ENCODE measurements at regions of chr1 and their contacts with region 1.

Region 1: GRCh38 chr1:28877132-28877781 is 37.1 kb upstream of the EPB41 start:
- DNase-seq: peak; percentile 84
- ATAC-seq: peak; percentile 78
- H3K4me3 ChIP-seq: no peak overlapping the region
- H3K4me3 Mint-ChIP-seq: no peak overlapping the region
- H3K27ac ChIP-seq: no peak overlapping the region
- H3K27ac Mint-ChIP-seq: no peak overlapping the region
- H3K4me1 ChIP-seq: peaks cover 4 to 5% of the 10 kb centered on the region in 2 donors
- H3K4me1 Mint-ChIP-seq: peaks cover 8% of the 10 kb centered on the region
- H3K27me3 ChIP-seq: no peaks in the 10 kb centered on the region
- H3K27me3 Mint-ChIP-seq: no peaks in the 10 kb centered on the region
- CTCF ChIP-seq: peak; percentile 99

Region 2: GRCh38 chr1:28412731-28413130 is 464.5 kb before region 1 on chr1:
- CTCF ChIA-PET with region 1: interaction called, 24 read pairs
- POLR2A ChIA-PET with region 1: interaction called, 3 read pairs
- intact Hi-C with region 1: no loop called
- DNase-seq: no peak
- ATAC-seq: no peak
- H3K4me3 ChIP-seq: no peak overlapping the region
- H3K4me3 Mint-ChIP-seq: no peak overlapping the region
- H3K27ac ChIP-seq: no peak overlapping the region
- H3K27ac Mint-ChIP-seq: no peak overlapping the region
- H3K4me1 ChIP-seq: peaks cover 2 to 6% of the 10 kb centered on the region in 2 donors
- H3K4me1 Mint-ChIP-seq: peaks cover 13% of the 10 kb centered on the region
- H3K27me3 ChIP-seq: no peaks in the 10 kb centered on the region
- H3K27me3 Mint-ChIP-seq: no peaks in the 10 kb centered on the region
- CTCF ChIP-seq: no peak

Region 3: GRCh38 chr1:28613175-28613574 is 264.1 kb before region 1 on chr1:
- CTCF ChIA-PET with region 1: no interaction called
- POLR2A ChIA-PET with region 1: no interaction called
- intact Hi-C with region 1: no loop called
- DNase-seq: no peak
- ATAC-seq: no peak
- H3K4me3 ChIP-seq: no peak overlapping the region
- H3K4me3 Mint-ChIP-seq: no peak overlapping the region
- H3K27ac ChIP-seq: no peak overlapping the region
- H3K27ac Mint-ChIP-seq: no peak overlapping the region
- H3K4me1 ChIP-seq: no peaks in the 10 kb centered on the region
- H3K4me1 Mint-ChIP-seq: no peaks in the 10 kb centered on the region
- H3K27me3 ChIP-seq: no peaks in the 10 kb centered on the region
- H3K27me3 Mint-ChIP-seq: no peaks in the 10 kb centered on the region
- CTCF ChIP-seq: no peak

Region 4: DNA sequence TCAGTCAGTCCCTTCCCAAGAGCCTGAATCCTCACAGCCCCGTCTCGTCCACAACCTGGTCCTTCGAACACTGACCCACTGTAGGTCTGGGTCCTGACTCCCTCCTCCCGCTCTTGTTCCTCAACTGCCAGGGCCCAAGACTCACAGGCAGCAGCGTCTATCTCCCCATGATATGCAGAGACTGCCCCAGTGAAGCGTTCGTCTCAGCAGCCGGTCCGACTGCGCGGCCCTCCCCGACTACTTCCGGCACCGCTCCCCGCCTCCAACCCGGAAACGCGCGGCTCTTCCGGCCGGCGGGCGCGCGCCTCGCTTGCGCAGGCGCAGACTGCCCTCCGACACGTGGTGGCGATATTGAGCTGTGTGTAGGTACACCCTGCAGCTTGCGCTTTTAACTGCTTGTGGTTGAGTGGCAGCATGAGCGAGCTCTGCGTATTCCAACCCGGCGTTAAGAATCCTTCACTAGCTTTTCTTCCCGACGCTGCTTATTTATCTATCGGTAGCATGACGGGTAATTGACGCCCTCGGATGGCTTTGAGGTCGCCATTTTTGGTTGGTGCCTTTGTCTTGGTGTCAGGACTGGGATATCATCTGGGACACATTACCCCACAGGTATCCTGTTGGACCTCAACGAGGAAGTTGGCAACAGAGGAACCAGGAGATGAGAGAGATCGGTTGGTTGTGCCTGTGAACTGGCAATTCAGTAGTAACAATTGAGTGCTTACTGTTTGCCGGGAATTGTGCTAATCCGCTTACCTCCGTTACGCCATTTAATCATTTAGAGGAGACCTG is 234.2 kb before region 1 on chr1 and contains the start of gene TAF12:
- CTCF ChIA-PET with region 1: interaction called, 26 read pairs
- POLR2A ChIA-PET with region 1: interaction called, 5 read pairs
- intact Hi-C with region 1: loop called (anchors 2 kb)
- DNase-seq: peak; percentile 97
- ATAC-seq: peak; percentile 84
- H3K4me3 ChIP-seq: peak within 1 kb of the TSS; percentile 67 to 91 (median 89)
- H3K4me3 Mint-ChIP-seq: peak within 1 kb of the TSS; percentile 100
- H3K27ac ChIP-seq: peak within 1 kb of the TSS; percentile 97 to 100
- H3K27ac Mint-ChIP-seq: peak within 1 kb of the TSS; percentile 99
- H3K4me1 ChIP-seq: peaks cover 29 to 31% of the 10 kb centered on the region in 2 donors
- H3K4me1 Mint-ChIP-seq: peaks cover 49% of the 10 kb centered on the region
- H3K27me3 ChIP-seq: no peaks in the 10 kb centered on the region
- H3K27me3 Mint-ChIP-seq: no peaks in the 10 kb centered on the region
- CTCF ChIP-seq: peak; percentile 54
- total RNA-seq, gene TAF12: 18.5 and 19.1 TPM in 2 replicates

Region 5: DNA sequence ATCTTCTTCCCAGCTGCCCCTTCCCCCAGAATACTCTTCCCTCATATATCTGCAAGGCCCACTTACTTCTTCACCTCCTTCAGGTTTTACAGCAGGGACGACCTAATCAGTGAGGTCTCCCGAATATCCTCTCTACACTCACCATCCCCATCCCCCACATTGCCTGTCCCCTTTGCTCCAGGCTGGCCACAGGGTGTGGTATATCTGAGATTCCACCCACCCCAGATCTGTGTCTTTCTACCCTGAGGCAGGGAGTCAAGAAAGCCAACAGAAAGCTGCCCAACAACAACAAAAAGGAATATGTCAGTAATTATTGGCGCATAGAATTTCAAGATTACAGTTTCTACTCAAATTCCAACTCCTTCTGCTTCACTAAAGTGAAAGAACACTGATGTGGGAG is 95.2 kb before region 1 on chr1:
- CTCF ChIA-PET with region 1: interaction called, 200 read pairs
- POLR2A ChIA-PET with region 1: interaction called, 4 read pairs
- intact Hi-C with region 1: no loop called
- DNase-seq: no peak
- ATAC-seq: no peak
- H3K4me3 ChIP-seq: no peak overlapping the region
- H3K4me3 Mint-ChIP-seq: no peak overlapping the region
- H3K27ac ChIP-seq: no peak overlapping the region
- H3K27ac Mint-ChIP-seq: no peak overlapping the region
- H3K4me1 ChIP-seq: peaks cover 4% of the 10 kb centered on the region in 2 donors
- H3K4me1 Mint-ChIP-seq: peaks cover 8% of the 10 kb centered on the region
- H3K27me3 ChIP-seq: no peaks in the 10 kb centered on the region
- H3K27me3 Mint-ChIP-seq: no peaks in the 10 kb centered on the region
- CTCF ChIP-seq: no peak

Region 6: DNA sequence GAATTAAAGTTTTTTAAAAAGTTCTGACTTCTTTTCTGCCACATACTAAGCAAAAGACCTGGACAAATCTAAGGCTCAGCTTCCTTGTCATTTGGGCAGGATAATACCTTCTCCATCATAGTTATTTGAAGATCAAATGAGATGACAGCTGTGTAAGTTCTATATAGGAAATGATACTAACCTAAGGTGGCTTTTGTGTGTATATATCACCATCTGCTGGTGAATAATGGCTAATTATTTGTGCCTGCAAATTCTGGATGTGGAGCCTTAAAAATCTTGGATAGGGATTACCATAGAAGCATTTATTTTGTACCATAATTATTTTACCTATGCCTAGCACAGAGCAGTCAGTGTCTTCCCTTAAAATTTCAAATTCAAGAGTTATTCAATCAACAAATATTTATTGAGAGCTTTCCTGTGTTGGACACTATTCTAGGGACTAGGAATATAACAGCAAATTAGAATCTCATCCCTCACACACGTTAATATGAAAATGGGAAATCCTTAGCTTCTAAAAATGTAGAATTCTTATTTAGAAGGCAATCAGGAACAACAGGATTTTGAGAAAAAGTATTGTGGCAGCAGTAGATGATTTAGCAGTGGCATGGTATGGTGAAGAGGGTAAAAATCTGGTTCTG is 156.7 kb after region 1 on chr1:
- CTCF ChIA-PET with region 1: interaction called, 502 read pairs
- POLR2A ChIA-PET with region 1: interaction called, 3 read pairs
- intact Hi-C with region 1: loop called (anchors 1 kb)
- DNase-seq: peak; percentile 65
- ATAC-seq: no peak
- H3K4me3 ChIP-seq: no peak overlapping the region
- H3K4me3 Mint-ChIP-seq: no peak overlapping the region
- H3K27ac ChIP-seq: no peak overlapping the region
- H3K27ac Mint-ChIP-seq: no peak overlapping the region
- H3K4me1 ChIP-seq: no peaks in the 10 kb centered on the region
- H3K4me1 Mint-ChIP-seq: no peaks in the 10 kb centered on the region
- H3K27me3 ChIP-seq: no peaks in the 10 kb centered on the region
- H3K27me3 Mint-ChIP-seq: no peaks in the 10 kb centered on the region
- CTCF ChIP-seq: peak; percentile 91

Measured in B cell (primary cell).